ENCODE measurements at regions of chr9 and their contacts with region 1.

Region 1: GRCh38 chr9:21995177-21996086 is 841 bp downstream of the CDKN2B-AS1 start:
- DNase-seq: no peak
- ATAC-seq: peak; percentile 78
- H3K4me3 ChIP-seq: peak overlapping the region; percentile 60 to 82 (median 77)
- H3K27ac ChIP-seq: no peak overlapping the region
- H3K4me1 ChIP-seq: peaks cover 9% of the 10 kb centered on the region
- H3K27me3 ChIP-seq: peaks cover 0 to 17% of the 10 kb centered on the region in 2 experiments; a peak in 1 of 5 replicates
- CTCF ChIP-seq: peak; percentile 52
- EP300 ChIP-seq: no peak
- POLR2A ChIP-seq: no peak
- RAD21 ChIP-seq: no peak

Region 2: DNA sequence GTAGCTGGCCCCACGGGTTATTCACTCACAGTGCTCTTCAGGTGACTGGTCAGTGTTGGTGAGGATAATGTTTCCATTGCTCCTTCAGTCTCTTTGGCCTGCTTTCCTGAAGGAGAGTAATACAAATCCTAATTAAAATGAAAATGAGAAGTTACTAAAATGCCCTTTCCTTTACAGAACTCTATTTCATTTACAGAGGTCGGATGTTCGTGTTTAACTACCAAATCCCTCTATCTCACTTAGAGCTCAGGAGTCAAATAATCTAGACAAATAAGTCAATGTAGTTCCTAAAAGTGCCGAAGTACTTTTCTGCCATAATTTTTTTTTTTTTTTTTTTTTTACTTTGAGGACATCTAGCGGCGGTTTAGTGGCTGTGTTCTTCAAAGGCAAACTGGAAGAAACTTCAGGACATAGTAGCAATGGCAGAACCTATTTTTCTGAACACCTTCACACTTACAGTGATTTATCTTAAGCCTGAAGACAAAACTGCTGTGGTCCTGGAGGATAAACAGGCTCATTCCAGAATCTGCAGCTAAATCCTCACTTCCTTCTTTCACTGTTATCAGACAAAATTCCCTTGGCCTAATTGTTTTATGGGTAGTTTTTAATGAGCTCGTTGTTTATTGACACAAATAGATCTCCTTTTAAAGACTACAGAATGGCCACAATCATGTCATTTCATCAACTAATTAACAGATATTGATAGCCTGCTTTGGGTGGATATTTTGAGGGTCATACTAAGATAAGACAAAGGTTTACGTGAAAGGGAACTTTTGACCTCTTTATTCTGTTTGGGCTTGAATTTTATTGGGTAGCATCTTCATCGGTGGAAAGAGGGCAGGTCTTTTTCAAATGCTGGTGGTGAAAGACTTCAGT is 243.6 kb after region 1 on chr9:
- CTCF ChIA-PET with region 1: no interaction called
- POLR2A ChIA-PET with region 1: no interaction called
- in situ Hi-C with region 1: loop called (anchors 10 kb)
- intact Hi-C with region 1: no loop called
- DNase-seq: peak; percentile 40
- ATAC-seq: peak; percentile 69
- H3K4me3 ChIP-seq: no peak overlapping the region
- H3K27ac ChIP-seq: no peak overlapping the region
- H3K4me1 ChIP-seq: 0 out of 2 replicates have a peak, but pooled peaks cover 8% of the 10 kb centered on the region
- H3K27me3 ChIP-seq: no peaks in the 10 kb centered on the region
- CTCF ChIP-seq: peak; percentile 32; the same call in 1 of the 2 replicates
- EP300 ChIP-seq: no peak
- POLR2A ChIP-seq: no peak
- RAD21 ChIP-seq: no peak